ENCODE measurements at regions of chr19 and their contacts with region 1.

Region 1: DNA sequence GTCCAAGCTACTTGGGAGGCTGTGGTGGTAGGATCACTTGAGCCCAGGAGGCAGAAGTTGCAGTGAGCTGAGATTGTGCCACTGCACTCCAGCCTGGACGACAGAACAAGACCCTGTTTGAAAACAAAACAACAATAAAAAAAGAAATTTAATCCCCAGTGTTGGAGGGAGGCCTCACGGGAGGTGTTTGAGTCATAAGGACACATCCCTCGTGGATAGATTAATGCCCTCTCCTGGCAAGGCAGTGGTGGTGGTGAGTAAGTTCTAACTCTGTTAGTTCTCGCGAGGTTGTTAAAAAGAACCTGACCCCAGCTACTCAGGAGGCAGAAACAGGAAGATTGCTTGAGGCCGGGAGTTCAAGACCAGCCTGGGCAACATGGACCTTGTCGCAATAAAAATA is 27.6 kb upstream of the SIN3B start:
- DNase-seq: peak; percentile 27
- H3K4me3 ChIP-seq: no peak overlapping the region
- H3K27ac ChIP-seq: no peak overlapping the region
- H3K4me1 ChIP-seq: no peaks in the 10 kb centered on the region
- H3K27me3 ChIP-seq: no peaks in the 10 kb centered on the region
- CTCF ChIP-seq: no peak

Region 2: GRCh38 chr19:16566161-16566560 is 235.4 kb before region 1 on chr19:
- CTCF ChIA-PET with region 1: no interaction called
- dilution Hi-C with region 1: no loop called
- in situ Hi-C with region 1: no loop called
- intact Hi-C with region 1: no loop called
- DNase-seq: no peak
- H3K4me3 ChIP-seq: no peak overlapping the region
- H3K27ac ChIP-seq: no peak overlapping the region
- H3K4me1 ChIP-seq: peaks cover 27% of the 10 kb centered on the region
- H3K27me3 ChIP-seq: no peaks in the 10 kb centered on the region
- CTCF ChIP-seq: no peak

Region 3: GRCh38 chr19:16771618-16772017 is 30.0 kb before region 1 on chr19:
- CTCF ChIA-PET with region 1: interaction called, 19 read pairs
- dilution Hi-C with region 1: no loop called
- in situ Hi-C with region 1: no loop called
- intact Hi-C with region 1: no loop called
- DNase-seq: peak; percentile 55
- H3K4me3 ChIP-seq: no peak overlapping the region
- H3K27ac ChIP-seq: no peak overlapping the region
- H3K4me1 ChIP-seq: peaks cover 3% of the 10 kb centered on the region
- H3K27me3 ChIP-seq: no peaks in the 10 kb centered on the region
- CTCF ChIP-seq: peak; percentile 81 to 86

Measured in mammary epithelial cell (primary cell).